ENCODE measurements at regions of chr2 and their contacts with region 1.

Region 1: GRCh38 chr2:37664231-37664643 is 7.2 kb downstream of the CDC42EP3 start:
- DNase-seq: no peak
- H3K4me3 ChIP-seq: no peak overlapping the region
- H3K27ac ChIP-seq: peak overlapping the region; percentile 20
- H3K4me1 ChIP-seq: peaks cover 46% of the 10 kb centered on the region
- H3K27me3 ChIP-seq: no peaks in the 10 kb centered on the region
- CTCF ChIP-seq: no peak
- POLR2A ChIP-seq: no peak

Region 2: DNA sequence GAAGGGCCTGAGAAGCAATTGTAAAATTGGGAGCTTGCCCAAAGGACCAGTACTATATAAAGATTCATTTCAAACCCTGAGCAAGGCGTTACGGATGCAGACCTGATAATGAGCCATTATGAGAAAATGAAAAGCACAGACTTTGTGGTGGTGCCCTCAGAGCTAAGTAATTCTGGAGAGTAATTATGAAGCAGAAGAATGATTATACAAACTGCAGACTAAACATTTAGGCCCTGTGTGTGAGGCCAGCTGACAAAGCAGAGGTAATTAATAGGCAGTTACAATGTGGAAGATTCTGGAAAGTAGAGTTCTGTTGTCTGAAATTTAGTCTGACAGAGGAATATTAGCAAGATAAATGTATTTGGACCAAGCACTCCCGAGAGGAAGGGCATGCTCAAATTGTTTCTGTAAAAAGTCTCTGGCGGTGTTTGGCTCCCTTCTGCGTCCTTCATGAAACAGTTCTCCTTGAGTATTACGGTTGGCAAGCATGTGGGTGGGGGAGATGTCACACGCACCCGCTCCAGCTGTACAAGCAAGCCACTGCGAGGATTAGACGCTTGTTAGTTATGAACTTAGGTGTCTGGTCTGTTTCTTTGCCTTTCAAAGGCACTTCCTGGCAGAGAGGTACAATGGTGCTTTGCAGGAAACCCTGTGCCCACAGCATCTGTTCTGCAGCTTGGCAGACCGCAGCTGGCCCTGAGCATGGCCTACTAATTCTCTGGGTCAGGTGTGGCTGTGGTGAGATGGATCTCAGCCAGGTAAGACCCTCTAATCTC is 38.3 kb before region 1 on chr2:
- intact Hi-C with region 1: loop called (anchors 5 kb)
- DNase-seq: no peak
- H3K4me3 ChIP-seq: no peak overlapping the region
- H3K27ac ChIP-seq: peak overlapping the region; percentile 9
- H3K4me1 ChIP-seq: no peaks in the 10 kb centered on the region
- H3K27me3 ChIP-seq: no peaks in the 10 kb centered on the region
- CTCF ChIP-seq: no peak
- POLR2A ChIP-seq: no peak